Endothelial cell of umbilical vein (primary cell): ENCODE measurements at regions of chr10 and their contacts with region 1.

Region 1: DNA sequence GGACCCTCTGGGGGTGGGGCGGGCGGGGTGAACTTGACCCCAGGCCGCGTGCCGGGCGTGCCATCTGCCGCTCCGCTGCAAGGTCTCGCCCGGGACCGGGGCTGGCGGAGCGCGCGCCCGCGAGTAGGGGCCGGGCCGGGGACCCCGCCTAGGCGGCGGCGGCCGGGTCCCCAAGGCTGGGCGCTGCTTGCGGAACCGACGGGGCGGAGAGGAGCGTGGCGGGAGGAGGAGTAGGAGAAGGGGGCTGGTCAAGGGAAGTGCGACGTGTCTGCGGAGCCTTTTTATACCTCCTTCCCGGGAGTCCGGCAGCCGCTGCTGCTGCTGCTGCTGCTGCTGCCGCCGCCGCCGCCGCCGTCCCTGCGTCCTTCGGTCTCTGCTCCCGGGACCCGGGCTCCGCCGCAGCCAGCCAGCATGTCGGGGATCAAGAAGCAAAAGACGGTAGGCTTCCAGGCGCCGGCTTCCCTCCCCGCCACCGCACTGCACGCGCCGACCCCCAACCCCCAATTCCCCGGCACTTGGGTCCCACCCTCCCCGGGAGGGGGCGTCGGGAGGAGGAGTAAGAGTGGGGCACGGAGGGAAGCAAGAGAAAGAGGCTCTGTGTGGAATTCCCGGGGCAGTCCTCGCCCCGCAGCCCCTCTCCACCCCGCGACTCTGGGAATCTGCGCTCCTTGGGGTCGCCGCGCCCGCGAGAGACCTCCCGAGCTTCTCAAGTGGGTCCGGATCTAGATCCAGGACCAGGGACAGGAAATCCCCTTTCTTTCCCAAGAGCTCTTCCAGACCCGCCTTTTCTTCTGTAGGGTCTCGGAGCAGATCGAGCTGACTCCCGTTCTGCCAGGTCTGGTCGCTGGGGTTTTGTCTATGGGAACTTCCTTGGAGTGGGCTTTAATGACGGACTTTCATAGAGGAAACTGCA is at the start of gene PAPSS2:
- DNase-seq: peak; percentile 72
- H3K4me3 ChIP-seq: peak within 1 kb of the TSS; percentile 95 to 100 (median 99)
- H3K27ac ChIP-seq: peak within 1 kb of the TSS; percentile 96
- H3K4me1 ChIP-seq: peaks cover 56% of the 10 kb centered on the region
- H3K27me3 ChIP-seq: no peaks in the 10 kb centered on the region
- CTCF ChIP-seq: peak in 1 of 2 donors; percentile 31
- POLR2A ChIP-seq: peak; percentile 90
- total RNA-seq, gene PAPSS2: 82.6 and 93.2 TPM in 2 replicates

Region 2: GRCh38 chr10:86971232-86971991 is 688.4 kb before region 1 on chr10:
- CTCF ChIA-PET with region 1: no interaction called
- POLR2A ChIA-PET with region 1: no interaction called
- dilution Hi-C with region 1: no loop called
- intact Hi-C with region 1: loop called (anchors 5 kb)
- DNase-seq: peak; percentile 73
- H3K4me3 ChIP-seq: peak overlapping the region in 2 of 3 experiments; percentile 47 to 48
- H3K27ac ChIP-seq: peak overlapping the region; percentile 77
- H3K4me1 ChIP-seq: peaks cover 48% of the 10 kb centered on the region
- H3K27me3 ChIP-seq: no peaks in the 10 kb centered on the region
- CTCF ChIP-seq: no peak
- POLR2A ChIP-seq: no peak

Region 3: GRCh38 chr10:87715552-87716347 is 55.9 kb after region 1 on chr10:
- CTCF ChIA-PET with region 1: interaction called, 3 read pairs
- POLR2A ChIA-PET with region 1: no interaction called
- dilution Hi-C with region 1: no loop called
- intact Hi-C with region 1: loop called (anchors 1 kb)
- DNase-seq: no peak
- H3K4me3 ChIP-seq: no peak overlapping the region
- H3K27ac ChIP-seq: peak overlapping the region; percentile 46
- H3K4me1 ChIP-seq: peaks cover 30% of the 10 kb centered on the region
- H3K27me3 ChIP-seq: no peaks in the 10 kb centered on the region
- CTCF ChIP-seq: no peak
- POLR2A ChIP-seq: no peak

Region 4: GRCh38 chr10:87734987-87735827 is 75.4 kb after region 1 on chr10:
- CTCF ChIA-PET with region 1: interaction called, 68 read pairs
- POLR2A ChIA-PET with region 1: no interaction called
- dilution Hi-C with region 1: no loop called
- intact Hi-C with region 1: loop called (anchors 1 kb)
- DNase-seq: peak; percentile 70
- H3K4me3 ChIP-seq: no peak overlapping the region
- H3K27ac ChIP-seq: no peak overlapping the region
- H3K4me1 ChIP-seq: peaks cover 9% of the 10 kb centered on the region
- H3K27me3 ChIP-seq: no peaks in the 10 kb centered on the region
- CTCF ChIP-seq: peak; percentile 49 to 68
- POLR2A ChIP-seq: no peak

Region 5: DNA sequence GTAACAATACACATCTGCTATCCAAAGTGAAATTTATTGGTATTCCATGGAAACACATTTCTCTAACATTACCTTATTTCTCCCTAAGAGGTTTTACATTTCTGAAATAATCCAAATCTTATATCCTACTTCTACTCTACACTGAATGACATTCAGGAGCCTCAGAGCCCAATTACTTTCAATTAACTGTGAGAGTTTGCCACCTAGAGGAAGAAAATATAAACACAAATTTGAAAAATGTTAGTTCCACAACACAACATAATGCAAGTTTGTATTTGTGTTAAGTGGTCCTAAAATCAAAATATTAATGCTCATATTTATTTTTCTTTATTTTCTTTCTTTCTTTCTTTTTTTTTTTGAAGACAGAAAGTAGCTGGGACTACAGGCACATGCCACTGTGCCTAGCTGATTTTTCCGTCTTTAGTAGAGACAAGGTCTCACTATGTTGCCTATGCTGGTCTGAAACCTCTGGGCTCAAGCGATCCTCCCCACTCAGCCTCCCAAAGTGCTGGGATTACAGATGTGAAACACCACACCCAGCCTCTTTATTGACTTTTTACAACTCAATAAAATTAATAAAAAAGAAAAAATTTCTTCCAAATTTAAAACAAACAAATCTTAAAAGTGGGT is 112.2 kb after region 1 on chr10:
- CTCF ChIA-PET with region 1: interaction called, 13 read pairs
- POLR2A ChIA-PET with region 1: no interaction called
- dilution Hi-C with region 1: no loop called
- intact Hi-C with region 1: loop called (anchors 1 kb)
- DNase-seq: peak; percentile 57
- H3K4me3 ChIP-seq: no peak overlapping the region
- H3K27ac ChIP-seq: no peak overlapping the region
- H3K4me1 ChIP-seq: peaks cover 17% of the 10 kb centered on the region
- H3K27me3 ChIP-seq: no peaks in the 10 kb centered on the region
- CTCF ChIP-seq: peak; percentile 21 to 35
- POLR2A ChIP-seq: no peak

Region 6: GRCh38 chr10:88114368-88114767 is 454.5 kb after region 1 on chr10:
- CTCF ChIA-PET with region 1: interaction called, 3 read pairs
- POLR2A ChIA-PET with region 1: no interaction called
- dilution Hi-C with region 1: no loop called
- intact Hi-C with region 1: loop called (anchors 2 kb)
- DNase-seq: peak; percentile 51
- H3K4me3 ChIP-seq: no peak overlapping the region
- H3K27ac ChIP-seq: no peak overlapping the region
- H3K4me1 ChIP-seq: no peaks in the 10 kb centered on the region
- H3K27me3 ChIP-seq: no peaks in the 10 kb centered on the region
- CTCF ChIP-seq: peak; percentile 42 to 71
- POLR2A ChIP-seq: no peak

Region 7: DNA sequence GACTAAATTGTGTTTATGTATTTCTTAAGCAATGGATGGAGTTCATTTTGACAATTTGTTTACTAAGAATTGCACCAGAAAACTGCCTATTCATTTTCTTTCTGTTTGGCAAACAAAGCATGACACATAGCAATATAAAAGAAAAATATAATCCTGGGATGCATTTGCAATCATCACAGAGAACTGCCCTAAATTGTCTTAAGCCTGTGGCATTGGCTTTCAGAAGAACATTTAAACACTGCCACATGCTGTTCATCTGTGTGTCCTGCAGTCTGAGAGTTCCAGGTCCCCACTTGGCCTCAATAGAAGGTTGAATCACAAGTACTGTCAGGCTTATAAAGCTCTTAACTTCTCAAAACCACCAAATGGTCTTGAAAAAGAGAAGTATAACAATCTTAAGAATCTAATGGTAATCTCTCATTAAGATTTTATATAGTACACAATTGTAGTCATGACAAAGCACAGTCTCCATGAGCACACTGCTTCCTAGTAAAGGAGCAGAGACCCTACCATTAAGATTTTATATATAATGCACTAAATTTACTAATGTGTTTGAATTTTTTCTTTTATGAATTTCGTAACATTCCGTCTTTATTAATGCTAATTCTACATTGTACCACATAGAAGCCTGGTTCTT is 893.4 kb after region 1 on chr10:
- CTCF ChIA-PET with region 1: no interaction called
- POLR2A ChIA-PET with region 1: no interaction called
- dilution Hi-C with region 1: no loop called
- intact Hi-C with region 1: loop called (anchors 1 kb)
- DNase-seq: peak; percentile 76
- H3K4me3 ChIP-seq: no peak overlapping the region
- H3K27ac ChIP-seq: no peak overlapping the region
- H3K4me1 ChIP-seq: no peaks in the 10 kb centered on the region
- H3K27me3 ChIP-seq: no peaks in the 10 kb centered on the region
- CTCF ChIP-seq: peak; percentile 63 to 64
- POLR2A ChIP-seq: no peak